ENCODE measurements at regions of chr15 and their contacts with region 1.

Region 1: DNA sequence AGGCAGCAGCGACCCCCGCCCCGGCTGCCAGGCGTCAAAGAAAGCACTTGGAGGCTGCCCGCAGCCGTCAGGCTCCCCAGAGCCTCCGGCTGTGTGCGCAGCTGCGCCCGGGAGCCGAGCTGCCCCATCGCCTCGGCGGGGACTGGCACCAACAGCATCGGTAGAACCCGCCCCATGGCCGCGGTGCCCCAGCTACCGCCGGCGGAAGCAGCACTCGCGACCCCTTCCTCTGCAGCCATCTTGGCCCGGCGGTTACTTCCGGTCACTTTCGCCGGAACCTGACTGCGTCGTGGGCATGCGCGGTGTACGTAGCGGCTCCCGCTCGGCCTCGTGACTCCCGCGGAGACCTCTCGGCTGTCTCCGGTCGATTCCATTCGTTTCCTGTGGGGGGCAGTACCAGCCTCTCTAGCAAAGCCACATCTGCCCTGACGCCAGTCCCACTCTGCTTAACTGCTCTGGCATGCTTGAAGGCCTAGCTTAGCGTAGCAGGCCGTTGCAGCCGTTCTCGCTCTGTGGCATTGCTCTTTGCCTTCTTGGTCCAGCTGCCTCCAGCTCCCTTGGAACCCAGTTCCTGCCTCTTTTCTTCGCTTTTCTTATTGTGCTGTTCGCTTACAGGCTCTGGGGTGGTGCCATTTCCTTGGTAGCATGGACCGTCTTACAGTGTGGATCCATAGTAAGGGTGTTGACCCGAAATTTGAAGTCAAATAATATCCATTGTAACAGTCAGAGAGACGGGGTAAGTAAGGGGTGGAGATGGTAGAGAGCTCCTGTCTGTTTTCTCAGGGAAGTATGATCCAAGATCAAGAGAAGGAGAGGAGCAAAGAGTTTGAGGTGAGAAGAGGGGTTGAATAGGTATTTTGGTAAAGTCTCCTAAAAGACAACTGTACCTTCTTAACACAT is at the start of gene SPG11:
- DNase-seq: peak; percentile 94
- H3K4me3 Mint-ChIP-seq: peak within 1 kb of the TSS; percentile 95
- H3K27ac Mint-ChIP-seq: peak within 1 kb of the TSS; percentile 94
- H3K4me1 Mint-ChIP-seq: peaks cover 60% of the 10 kb centered on the region
- H3K27me3 Mint-ChIP-seq: no peaks in the 10 kb centered on the region
- total RNA-seq, gene SPG11: 65.2 and 70.4 TPM in 2 replicates

Region 2: GRCh38 chr15:42914728-42915497 is 1748.7 kb before region 1 on chr15:
- intact Hi-C with region 1: no loop called
- DNase-seq: no peak
- H3K4me3 Mint-ChIP-seq: no peak overlapping the region
- H3K27ac Mint-ChIP-seq: no peak overlapping the region
- H3K4me1 Mint-ChIP-seq: peaks cover 32% of the 10 kb centered on the region
- H3K27me3 Mint-ChIP-seq: no peaks in the 10 kb centered on the region

Region 3: GRCh38 chr15:44536962-44537734 is 126.5 kb before region 1 on chr15 and contains the start of gene EIF3J:
- intact Hi-C with region 1: loop called (anchors 5 kb)
- DNase-seq: peak; percentile 95
- H3K4me3 Mint-ChIP-seq: peak within 1 kb of the TSS; percentile 93
- H3K27ac Mint-ChIP-seq: peak within 1 kb of the TSS; percentile 98
- H3K4me1 Mint-ChIP-seq: peaks cover 52% of the 10 kb centered on the region
- H3K27me3 Mint-ChIP-seq: no peaks in the 10 kb centered on the region
- total RNA-seq, gene EIF3J: 163 and 168 TPM in 2 replicates

Region 4: DNA sequence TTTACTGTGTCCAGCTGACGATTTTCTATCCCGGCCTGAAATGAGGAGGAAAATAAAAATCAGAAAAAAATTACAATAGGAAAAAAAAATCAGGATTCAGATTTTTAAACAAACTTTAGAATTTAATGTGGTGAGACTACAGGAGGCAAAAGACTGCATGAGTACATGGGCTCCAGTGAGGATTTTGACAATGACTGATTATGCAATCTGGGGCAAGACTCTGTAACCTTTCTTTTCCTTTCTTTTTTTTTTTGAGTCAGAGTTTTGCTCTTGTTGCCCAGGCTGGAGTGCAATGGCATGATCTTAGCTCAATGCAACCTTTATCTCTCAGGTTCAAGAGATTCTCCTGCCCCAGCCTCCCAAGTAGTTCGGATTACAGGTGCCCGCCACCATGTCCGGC is 30.1 kb before region 1 on chr15:
- intact Hi-C with region 1: loop called (anchors 1 kb)
- DNase-seq: no peak
- H3K4me3 Mint-ChIP-seq: peak overlapping the region; percentile 74
- H3K27ac Mint-ChIP-seq: peak overlapping the region; percentile 96
- H3K4me1 Mint-ChIP-seq: peaks cover 20% of the 10 kb centered on the region
- H3K27me3 Mint-ChIP-seq: no peaks in the 10 kb centered on the region

Region 5: DNA sequence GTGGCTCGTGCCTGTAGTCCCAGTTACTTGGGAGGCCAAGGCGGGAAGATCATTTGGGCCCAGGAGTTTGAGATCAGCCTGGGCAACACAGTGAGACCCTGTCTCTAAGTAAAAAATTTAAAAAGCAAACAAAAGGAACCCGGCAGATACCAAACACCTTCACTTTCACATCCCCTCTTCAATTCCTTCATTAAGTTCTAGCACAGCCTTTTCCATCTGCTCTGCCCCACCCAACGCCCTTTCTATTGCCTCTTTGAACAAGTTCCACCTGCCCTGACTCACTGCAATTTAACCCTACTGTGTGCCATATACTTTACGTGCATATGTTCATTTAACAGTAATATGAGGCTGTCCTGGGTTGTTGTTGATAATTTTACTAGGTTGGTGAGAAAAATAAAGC is 12.3 kb after region 1 on chr15:
- intact Hi-C with region 1: loop called (anchors 1 kb)
- DNase-seq: no peak
- H3K4me3 Mint-ChIP-seq: peak overlapping the region; percentile 66
- H3K27ac Mint-ChIP-seq: peak overlapping the region; percentile 86
- H3K4me1 Mint-ChIP-seq: peaks cover 76% of the 10 kb centered on the region
- H3K27me3 Mint-ChIP-seq: no peaks in the 10 kb centered on the region

Region 6: GRCh38 chr15:44711356-44712107 is 47.9 kb after region 1 on chr15 and contains the start of gene B2M:
- intact Hi-C with region 1: loop called (anchors 1 kb)
- DNase-seq: peak; percentile 95
- H3K4me3 Mint-ChIP-seq: peak within 1 kb of the TSS; percentile 99
- H3K27ac Mint-ChIP-seq: peak within 1 kb of the TSS; percentile 99
- H3K4me1 Mint-ChIP-seq: peaks cover 49% of the 10 kb centered on the region
- H3K27me3 Mint-ChIP-seq: no peaks in the 10 kb centered on the region
- total RNA-seq, gene B2M: 4,313 and 4,559 TPM in 2 replicates

Region 7: GRCh38 chr15:44738340-44738984 is 74.8 kb after region 1 on chr15:
- intact Hi-C with region 1: loop called (anchors 1 kb)
- DNase-seq: no peak
- H3K4me3 Mint-ChIP-seq: peak overlapping the region; percentile 56
- H3K27ac Mint-ChIP-seq: peak overlapping the region; percentile 40
- H3K4me1 Mint-ChIP-seq: peaks cover 44% of the 10 kb centered on the region
- H3K27me3 Mint-ChIP-seq: no peaks in the 10 kb centered on the region